Dendritic cell treated with granulocyte-macrophage colony-stimulating factor and Interleukin-4, amounts not matched to agents 40 ng/mL and 50 ng/mL, for 4 days (primary cell): ENCODE measurements at regions of chr4 and their contacts with region 1.

Region 1: DNA sequence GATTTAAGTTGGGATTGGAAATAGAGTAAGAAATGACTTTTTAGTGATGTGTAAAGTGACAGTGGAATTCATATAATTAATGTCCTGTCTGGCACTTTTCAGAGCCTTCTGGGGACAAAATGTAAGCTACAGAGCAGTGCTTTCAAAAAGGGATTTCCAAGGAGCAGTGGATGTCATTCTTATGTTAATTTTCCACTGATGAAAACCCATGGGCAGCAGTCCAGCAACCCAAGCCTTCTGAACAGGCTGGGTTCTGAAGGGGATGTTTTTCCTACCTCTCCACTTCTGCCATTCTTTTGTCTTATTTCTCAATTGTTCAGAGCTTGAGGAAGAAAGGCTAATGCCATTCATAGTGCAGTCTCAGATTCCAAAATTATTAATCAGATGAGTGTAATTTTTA is 717.6 kb upstream of the HS3ST1 start:
- H3K4me3 Mint-ChIP-seq: no peak overlapping the region
- H3K27ac Mint-ChIP-seq: no peak overlapping the region
- H3K4me1 Mint-ChIP-seq: no peaks in the 10 kb centered on the region
- H3K27me3 Mint-ChIP-seq: no peaks in the 10 kb centered on the region

Region 2: DNA sequence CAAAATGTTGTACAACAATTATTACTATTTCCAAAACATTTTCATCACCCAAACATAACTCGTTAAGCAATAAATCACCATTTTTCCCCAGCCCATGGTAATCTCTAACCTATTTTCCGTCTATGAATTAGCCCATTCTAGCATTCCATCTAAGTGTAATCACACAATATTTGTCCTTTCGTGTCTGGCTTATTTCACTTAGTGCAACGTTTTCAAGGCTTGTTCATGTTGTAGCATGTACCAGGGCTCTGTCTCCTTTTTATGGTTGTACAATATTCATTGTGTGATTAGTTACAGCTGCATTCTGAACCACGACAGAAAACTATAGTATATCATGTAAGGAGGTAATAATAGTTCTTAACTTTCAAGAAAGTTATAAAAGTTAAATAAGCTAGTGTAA is 61.6 kb before region 1 on chr4:
- intact Hi-C with region 1: loop called (anchors 10 kb)
- H3K4me3 Mint-ChIP-seq: no peak overlapping the region
- H3K27ac Mint-ChIP-seq: no peak overlapping the region
- H3K4me1 Mint-ChIP-seq: peaks cover 5% of the 10 kb centered on the region
- H3K27me3 Mint-ChIP-seq: peaks cover 2% of the 10 kb centered on the region